K562 (cell line): ENCODE measurements at regions of chr1 and their contacts with region 1.

Region 1: GRCh38 chr1:200211157-200211556 is 183.6 kb downstream of the NR5A2 start:
- DNase-seq: no peak
- ATAC-seq: no peak
- H3K4me3 ChIP-seq: no peak overlapping the region
- H3K27ac ChIP-seq: no peak overlapping the region
- H3K4me1 ChIP-seq: peaks cover 3 to 10% of the 10 kb centered on the region in 2 experiments; a peak in 4 of 5 replicates
- H3K27me3 ChIP-seq: no peaks in the 10 kb centered on the region; a peak in 1 of 5 replicates
- CTCF ChIP-seq: no peak
- EP300 ChIP-seq: no peak
- POLR2A ChIP-seq: no peak
- RAD21 ChIP-seq: no peak

Region 2: DNA sequence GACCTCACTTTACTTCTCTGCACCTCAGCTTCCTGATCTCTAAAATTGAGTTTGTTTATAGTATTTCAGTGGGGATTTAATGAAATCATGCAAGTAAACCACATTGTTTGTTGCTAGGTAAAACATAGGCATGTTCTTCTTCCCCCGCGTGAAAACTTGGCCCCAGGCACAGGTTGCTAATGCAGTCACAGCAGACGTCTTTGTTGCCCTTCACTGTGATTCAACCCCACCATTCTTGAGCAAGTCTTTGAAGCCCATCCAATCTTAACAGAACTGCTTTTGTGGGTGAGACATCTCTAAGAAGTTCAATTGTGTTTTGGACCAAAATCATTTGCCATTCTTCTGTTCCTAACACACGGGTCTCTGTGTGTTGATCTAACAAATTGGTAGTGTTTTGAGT is 13.2 kb after region 1 on chr1:
- CTCF ChIA-PET with region 1: no interaction called
- POLR2A ChIA-PET with region 1: interaction called, 17 read pairs
- in situ Hi-C with region 1: no loop called
- intact Hi-C with region 1: no loop called
- DNase-seq: no peak
- ATAC-seq: no peak
- H3K4me3 ChIP-seq: no peak overlapping the region
- H3K27ac ChIP-seq: no peak overlapping the region
- H3K4me1 ChIP-seq: peaks cover 0 to 10% of the 10 kb centered on the region in 2 experiments; a peak in 2 of 5 replicates
- H3K27me3 ChIP-seq: no peaks in the 10 kb centered on the region; a peak in 1 of 5 replicates
- CTCF ChIP-seq: no peak
- EP300 ChIP-seq: no peak
- POLR2A ChIP-seq: no peak
- RAD21 ChIP-seq: no peak